Activated CD8-positive, alpha-beta memory T cell treated with anti-CD3 and anti-CD28 coated beads, Interleukin-2, amount 10 ng/mL, durations not matched to agents 7 days and 5 days (primary cell): ENCODE measurements at regions of chr2 and their contacts with region 1.

Region 1: GRCh38 chr2:95389245-95390119 is 13.0 kb upstream of the FAHD2A start:
- DNase-seq: peak; percentile 63
- ATAC-seq: peak; percentile 77
- H3K4me3 Mint-ChIP-seq: no peak overlapping the region
- H3K27ac Mint-ChIP-seq: no peak overlapping the region
- H3K4me1 Mint-ChIP-seq: no peaks in the 10 kb centered on the region
- H3K27me3 Mint-ChIP-seq: no peaks in the 10 kb centered on the region

Region 2: DNA sequence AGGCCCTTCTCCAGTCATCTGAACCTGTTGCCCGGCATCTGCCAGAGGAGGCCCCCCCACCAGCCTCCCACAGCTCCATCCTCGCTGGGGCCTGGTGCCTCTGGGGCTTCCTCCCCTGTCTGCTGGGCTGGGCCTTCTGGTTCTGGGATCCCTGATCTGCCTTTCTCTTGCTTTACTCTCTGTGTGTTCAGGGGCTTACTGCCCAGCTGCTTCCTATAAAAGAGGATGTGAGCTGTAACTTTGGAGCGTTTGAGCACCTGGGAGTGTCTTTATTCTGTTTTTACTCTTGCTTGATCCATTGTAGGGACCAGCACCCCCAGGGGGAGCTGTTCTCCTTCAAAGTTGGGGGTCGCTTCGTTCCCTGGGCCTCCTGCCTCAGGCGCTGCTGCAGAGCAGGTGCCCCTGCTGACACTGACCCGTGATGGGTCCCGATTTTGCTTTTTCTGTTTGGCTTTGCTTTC is 10.1 kb before region 1 on chr2:
- CTCF ChIA-PET with region 1: interaction called, 10 read pairs
- DNase-seq: no peak
- ATAC-seq: no peak
- H3K4me3 Mint-ChIP-seq: no peak overlapping the region
- H3K27ac Mint-ChIP-seq: no peak overlapping the region
- H3K4me1 Mint-ChIP-seq: no peaks in the 10 kb centered on the region
- H3K27me3 Mint-ChIP-seq: peaks cover 10% of the 10 kb centered on the region

Region 3: DNA sequence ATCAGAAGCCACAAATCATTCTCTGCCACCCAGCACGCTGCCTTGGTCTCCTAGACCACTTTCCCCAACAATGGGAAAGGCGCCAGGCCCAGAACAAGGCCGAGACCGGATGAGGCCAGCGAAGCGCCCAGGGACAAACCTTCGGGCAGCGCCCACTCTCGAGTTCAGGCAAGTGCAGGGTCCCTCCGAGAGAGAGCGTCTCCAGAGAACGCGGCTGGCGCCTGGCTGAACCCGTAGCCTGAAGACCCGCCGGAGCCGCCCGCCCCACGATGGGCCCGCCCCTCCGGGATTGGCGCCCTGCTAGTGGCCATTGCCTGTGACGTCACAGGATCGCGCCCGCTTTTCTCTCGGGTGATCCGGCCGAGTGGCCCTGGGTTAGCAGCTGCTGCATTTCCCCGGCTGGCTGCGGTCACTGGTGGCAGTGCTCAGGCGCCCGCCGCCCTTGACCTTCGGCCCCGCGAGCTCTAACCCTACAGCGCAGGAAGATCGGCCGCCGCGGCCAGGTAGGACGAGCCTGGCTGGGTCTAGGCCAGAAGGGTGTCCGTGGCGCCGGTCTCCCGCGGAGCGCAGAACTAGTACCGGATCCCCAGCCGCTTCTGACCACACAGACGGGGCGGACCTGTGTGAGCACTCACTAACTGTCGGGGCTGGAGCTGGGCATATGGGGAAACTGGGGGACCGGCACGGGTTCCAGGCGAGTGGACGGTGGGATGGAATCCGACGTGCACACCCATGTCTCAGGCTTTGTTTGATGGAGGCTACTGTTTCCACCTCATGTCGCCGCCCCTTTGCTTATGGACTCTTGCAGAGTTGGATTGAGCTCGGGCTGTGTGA is 13.1 kb after region 1 on chr2 and contains the start of gene FAHD2A:
- CTCF ChIA-PET with region 1: interaction called, 21 read pairs
- DNase-seq: peak; percentile 98
- ATAC-seq: peak; percentile 97
- H3K4me3 Mint-ChIP-seq: peak within 1 kb of the TSS; percentile 92
- H3K27ac Mint-ChIP-seq: peak within 1 kb of the TSS; percentile 93
- H3K4me1 Mint-ChIP-seq: peaks cover 20% of the 10 kb centered on the region
- H3K27me3 Mint-ChIP-seq: no peaks in the 10 kb centered on the region
- total RNA-seq, gene FAHD2A: 36.0 to 38.6 TPM